ENCODE measurements at regions of chr15 and their contacts with region 1.

Region 1: GRCh38 chr15:93030430-93031105 is 58.4 kb downstream of the RGMA start:
- DNase-seq: peak; percentile 73
- H3K4me3 ChIP-seq: no peak overlapping the region
- H3K27ac ChIP-seq: peak overlapping the region; percentile 76 to 86 (median 83)
- H3K4me1 ChIP-seq: peaks cover 26 to 48% (median 40%) of the 10 kb centered on the region in 4 donors
- H3K27me3 ChIP-seq: no peaks in the 10 kb centered on the region
- CTCF ChIP-seq: peak; percentile 82 to 90 (median 86)
- EP300 ChIP-seq: no peak
- POLR2A ChIP-seq: no peak

Region 2: DNA sequence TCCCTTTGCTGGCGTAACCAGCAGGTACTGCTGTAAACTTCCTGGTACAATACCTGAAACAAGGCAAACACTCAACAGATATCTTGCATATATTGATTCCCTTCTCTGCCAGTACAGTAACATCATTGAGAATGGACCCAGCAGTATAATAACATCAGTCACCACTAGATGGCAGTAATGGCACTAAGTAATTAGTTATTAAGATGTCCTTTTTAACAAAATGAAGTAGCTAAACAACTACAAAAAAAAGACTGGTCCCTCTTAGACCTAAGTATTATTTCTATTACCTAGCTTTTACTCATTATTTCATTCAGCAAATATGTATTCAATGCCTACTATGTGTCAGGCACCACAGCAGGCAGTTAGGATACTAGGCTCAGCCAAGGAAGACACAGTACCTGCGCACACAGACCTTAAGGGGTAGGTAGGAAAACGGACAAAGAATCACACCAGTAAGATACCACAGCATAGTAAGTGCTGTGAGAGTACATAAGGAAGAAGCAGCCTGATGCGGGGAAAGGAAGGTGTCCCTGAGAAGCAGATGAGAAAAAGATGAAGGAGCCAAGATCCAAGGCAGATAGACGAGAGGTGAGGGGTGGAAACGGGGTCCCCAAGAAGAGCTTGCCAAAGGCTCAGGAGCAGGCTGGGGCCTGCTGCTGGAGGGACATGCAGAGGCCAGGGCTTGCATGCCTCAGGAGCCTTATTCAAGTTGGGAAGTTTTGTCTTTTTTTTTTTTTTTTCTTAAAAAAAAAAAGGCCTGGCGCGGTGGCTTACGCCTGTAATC is 233.2 kb before region 1 on chr15:
- in situ Hi-C with region 1: no loop called
- intact Hi-C with region 1: loop called (anchors 10 kb)
- DNase-seq: no peak
- H3K4me3 ChIP-seq: no peak overlapping the region
- H3K27ac ChIP-seq: peak overlapping the region in 3 of 4 donors; percentile 28 to 52 (median 31)
- H3K4me1 ChIP-seq: peaks cover 4 to 25% (median 12%) of the 10 kb centered on the region in 4 donors
- H3K27me3 ChIP-seq: no peaks in the 10 kb centered on the region
- CTCF ChIP-seq: peak; percentile 75 to 85 (median 83)
- EP300 ChIP-seq: no peak
- POLR2A ChIP-seq: no peak

Region 3: DNA sequence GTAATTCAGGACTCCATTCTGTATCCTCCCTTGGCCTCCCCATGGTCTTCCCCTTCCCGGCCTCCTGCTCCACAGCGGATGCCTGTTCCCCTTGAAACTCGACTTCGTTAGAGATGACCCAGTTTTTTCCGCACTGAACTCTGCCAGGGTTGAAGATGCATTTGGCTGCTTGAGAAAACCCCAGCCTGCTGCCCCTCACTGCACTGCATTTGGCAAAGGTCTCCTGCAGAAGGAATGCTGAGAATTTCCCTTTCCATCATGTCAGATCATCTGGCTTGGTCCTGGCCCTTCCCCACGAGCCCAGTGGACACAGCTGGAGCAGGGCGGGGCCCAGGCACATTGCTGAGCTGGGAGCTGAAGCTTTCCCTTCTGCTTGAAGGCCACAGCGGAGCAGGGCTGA is 96.0 kb after region 1 on chr15:
- in situ Hi-C with region 1: no loop called
- intact Hi-C with region 1: no loop called
- DNase-seq: no peak
- H3K4me3 ChIP-seq: no peak overlapping the region
- H3K27ac ChIP-seq: no peak overlapping the region
- H3K4me1 ChIP-seq: no peaks in the 10 kb centered on the region
- H3K27me3 ChIP-seq: no peaks in the 10 kb centered on the region
- CTCF ChIP-seq: no peak
- EP300 ChIP-seq: no peak
- POLR2A ChIP-seq: no peak

Region 4: GRCh38 chr15:93321881-93322289 is 291.3 kb after region 1 on chr15:
- in situ Hi-C with region 1: no loop called
- intact Hi-C with region 1: loop called (anchors 10 kb)
- DNase-seq: no peak
- H3K4me3 ChIP-seq: no peak overlapping the region
- H3K27ac ChIP-seq: no peak overlapping the region
- H3K4me1 ChIP-seq: no peaks in the 10 kb centered on the region
- H3K27me3 ChIP-seq: no peaks in the 10 kb centered on the region
- CTCF ChIP-seq: no peak
- EP300 ChIP-seq: no peak
- POLR2A ChIP-seq: no peak

Region 5: DNA sequence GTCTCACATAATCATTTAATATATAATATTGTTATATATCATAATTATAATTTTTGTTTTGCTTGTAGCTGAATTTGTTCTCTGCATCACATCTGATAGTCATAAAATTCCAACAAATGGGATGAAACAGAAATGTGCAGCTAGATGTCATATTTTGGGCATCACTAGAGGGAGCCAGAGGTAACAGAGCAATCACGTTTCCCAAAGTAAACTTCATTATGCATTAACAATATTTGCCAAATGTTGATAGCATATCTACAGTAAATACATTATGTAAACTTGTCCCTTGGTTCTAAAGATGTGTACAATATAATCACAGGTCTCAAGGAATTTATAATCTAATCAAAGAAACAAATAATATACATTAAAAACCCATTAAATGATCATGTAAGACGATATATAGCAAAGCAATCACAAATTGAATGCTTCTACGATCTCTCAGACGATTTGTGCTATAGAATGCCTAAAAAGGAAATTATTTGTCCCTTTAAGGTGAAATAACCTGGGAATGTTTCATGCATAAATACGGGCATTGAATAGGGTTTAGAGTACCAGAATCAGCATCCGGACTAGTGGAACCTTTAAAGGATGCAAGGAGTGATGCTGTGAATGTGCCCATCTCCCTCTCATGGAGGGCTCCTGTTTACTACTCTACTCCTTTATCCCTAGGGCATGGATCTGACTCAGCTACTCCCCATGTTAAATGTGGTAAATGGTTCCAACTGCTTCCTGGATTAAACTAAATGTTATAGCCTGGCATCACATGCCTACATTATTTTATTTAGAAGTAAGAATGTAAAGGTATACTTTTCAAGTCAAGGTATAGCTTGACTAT is 966.7 kb after region 1 on chr15:
- in situ Hi-C with region 1: no loop called
- intact Hi-C with region 1: loop called (anchors 10 kb)
- DNase-seq: no peak
- H3K4me3 ChIP-seq: no peak overlapping the region
- H3K27ac ChIP-seq: no peak overlapping the region
- H3K4me1 ChIP-seq: no peaks in the 10 kb centered on the region
- H3K27me3 ChIP-seq: no peaks in the 10 kb centered on the region
- CTCF ChIP-seq: peak; percentile 51 to 73 (median 62)
- EP300 ChIP-seq: no peak
- POLR2A ChIP-seq: no peak

Region 6: DNA sequence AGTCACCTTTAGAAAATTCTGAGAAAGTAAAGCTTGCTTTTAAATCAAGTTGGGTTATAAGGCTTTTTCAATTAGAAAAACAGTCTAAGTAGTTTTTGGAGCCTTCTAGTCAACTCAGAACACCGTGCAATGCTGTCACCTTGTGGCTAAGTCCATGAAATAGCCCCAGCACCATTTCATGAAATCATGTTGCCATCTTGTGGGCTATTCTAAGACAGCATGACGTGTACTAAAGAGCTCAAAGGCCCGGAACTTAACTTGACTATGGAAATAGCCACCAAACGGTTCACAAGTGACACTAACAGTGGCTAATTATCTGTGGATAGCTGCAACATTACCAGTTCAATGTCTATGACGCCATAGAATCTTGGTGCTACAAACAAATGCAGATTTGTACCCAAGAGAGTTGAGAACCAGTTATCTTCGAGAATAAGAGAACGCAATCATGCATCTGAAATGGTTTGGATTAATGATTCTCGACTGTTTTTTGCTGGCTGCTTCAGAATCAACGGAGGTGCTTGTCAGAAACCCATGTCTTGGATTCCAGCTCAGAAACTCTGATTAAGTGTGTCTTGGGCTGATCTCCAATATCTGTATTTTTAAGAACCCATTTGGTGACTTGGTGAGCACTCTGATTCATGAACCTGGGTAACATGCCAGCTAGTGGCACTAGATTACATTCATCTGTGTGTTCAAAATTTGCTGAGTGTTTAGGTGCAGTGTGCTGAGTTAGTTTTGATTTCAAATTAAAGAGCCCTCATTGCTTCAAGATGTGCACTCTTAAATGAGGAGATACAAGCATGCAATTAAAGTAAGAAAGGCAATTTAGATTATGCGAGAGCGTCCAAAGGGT is 1089.6 kb after region 1 on chr15:
- in situ Hi-C with region 1: loop called (anchors 10 to 25 kb)
- intact Hi-C with region 1: loop called (anchors 2 kb)
- DNase-seq: peak; percentile 56
- H3K4me3 ChIP-seq: no peak overlapping the region
- H3K27ac ChIP-seq: peak overlapping the region; percentile 51 to 81 (median 61)
- H3K4me1 ChIP-seq: peaks cover 0 to 16% (median 3%) of the 10 kb centered on the region in 4 donors
- H3K27me3 ChIP-seq: no peaks in the 10 kb centered on the region
- CTCF ChIP-seq: peak; percentile 83 to 97 (median 90)
- EP300 ChIP-seq: no peak
- POLR2A ChIP-seq: no peak

Region 7: DNA sequence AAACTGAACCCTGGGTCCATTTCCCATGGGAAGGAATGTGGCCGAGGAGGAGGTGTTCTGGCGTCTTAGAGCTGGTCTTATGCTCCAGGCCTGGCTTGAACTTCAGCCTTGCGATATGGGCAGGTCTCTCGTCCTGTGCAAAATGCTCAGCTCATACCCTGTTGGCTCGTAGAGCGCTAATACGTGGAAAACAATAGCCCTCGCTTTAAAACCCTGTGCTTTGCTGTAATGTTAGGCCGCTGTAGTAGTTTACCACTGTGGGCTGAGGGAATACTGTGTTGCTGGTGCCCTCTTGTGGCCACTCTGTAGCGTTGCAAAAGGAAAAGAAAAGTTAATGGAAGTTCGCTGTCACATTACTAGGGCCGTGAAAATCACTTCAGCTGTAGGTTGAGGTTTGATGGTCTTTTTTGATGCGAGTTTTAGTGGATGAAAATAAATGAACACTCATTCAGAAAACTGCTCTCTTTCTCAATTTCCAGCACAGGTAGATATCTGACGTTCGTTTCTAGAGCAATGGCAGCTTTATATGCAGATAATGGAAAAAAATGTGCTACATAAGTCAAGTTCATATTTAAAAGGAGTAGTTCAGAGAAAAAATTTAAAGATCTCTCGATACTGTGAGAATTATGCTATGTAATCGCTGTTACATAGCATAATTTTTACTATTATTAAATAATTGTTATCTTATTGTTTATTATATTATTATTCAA is 1293.7 kb after region 1 on chr15:
- in situ Hi-C with region 1: no loop called
- intact Hi-C with region 1: loop called (anchors 10 kb)
- DNase-seq: peak; percentile 68
- H3K4me3 ChIP-seq: no peak overlapping the region
- H3K27ac ChIP-seq: peak overlapping the region in 2 of 4 donors; percentile 53 to 64
- H3K4me1 ChIP-seq: peaks cover 7 to 34% (median 22%) of the 10 kb centered on the region in 4 donors
- H3K27me3 ChIP-seq: no peaks in the 10 kb centered on the region
- CTCF ChIP-seq: peak; percentile 86 to 94 (median 91)
- EP300 ChIP-seq: no peak
- POLR2A ChIP-seq: no peak